CD4-positive, alpha-beta memory T cell (primary cell): ENCODE measurements at regions of chr16 and their contacts with region 1.

Region 1: GRCh38 chr16:10256784-10257641 is 74.8 kb upstream of the GRIN2A start:
- DNase-seq: peak in 4 of 5 donors; percentile 12 to 41 (median 29)
- H3K4me3 ChIP-seq: no peak overlapping the region
- H3K4me3 Mint-ChIP-seq: peak overlapping the region in 1 of 8 donors; percentile 13
- H3K27ac ChIP-seq: no peak overlapping the region
- H3K27ac Mint-ChIP-seq: peak overlapping the region in 1 of 7 donors; percentile 56
- H3K4me1 ChIP-seq: peaks cover 4% of the 10 kb centered on the region
- H3K4me1 Mint-ChIP-seq: peaks cover 0 to 6% (median 2%) of the 10 kb centered on the region in 4 donors
- H3K27me3 ChIP-seq: no peaks in the 10 kb centered on the region
- H3K27me3 Mint-ChIP-seq: peaks cover 6 to 12% of the 10 kb centered on the region in 2 donors

Region 2: DNA sequence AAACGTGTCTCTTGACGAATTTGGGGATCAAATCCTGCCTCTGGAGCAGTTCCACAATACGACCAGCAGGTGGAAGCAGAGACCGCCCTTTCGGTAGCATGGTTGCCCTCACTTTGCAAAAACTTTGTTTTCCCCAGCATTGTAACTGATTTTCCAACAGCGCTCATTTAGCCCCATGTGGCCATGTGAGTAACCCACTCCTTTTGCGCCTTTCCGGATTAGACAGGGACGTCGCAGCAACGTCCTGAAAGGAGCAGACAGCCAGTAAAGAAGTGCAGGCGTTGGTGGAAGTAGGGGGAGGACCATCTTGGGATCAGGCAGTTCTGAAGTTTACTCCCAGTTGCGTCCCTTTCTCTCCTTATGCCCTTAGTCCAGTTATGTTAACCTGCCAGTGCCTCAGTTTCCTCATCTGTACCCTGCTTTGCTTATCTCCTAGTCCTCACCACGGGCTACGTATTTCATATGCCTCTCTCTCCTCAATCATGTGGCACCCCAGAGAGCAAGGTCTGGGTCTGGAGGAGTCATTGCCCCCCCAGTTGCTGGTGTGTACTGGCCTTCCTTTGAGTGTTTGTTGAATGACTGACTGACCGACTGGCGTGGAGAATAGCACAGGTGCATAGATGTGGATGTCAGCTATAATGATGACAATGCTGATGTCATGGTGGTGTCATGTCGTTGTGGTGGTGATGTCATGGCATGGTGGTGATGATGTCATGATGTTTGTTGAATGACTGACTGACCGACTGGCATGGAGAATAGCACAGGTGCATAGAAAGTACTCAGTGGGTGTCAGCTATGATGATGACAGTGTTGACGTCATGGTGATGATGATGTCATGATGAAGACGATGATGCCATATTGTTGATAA is 1689.0 kb before region 1 on chr16:
- CTCF ChIA-PET with region 1: no interaction called
- POLR2A ChIA-PET with region 1: no interaction called
- intact Hi-C with region 1: loop called (anchors 10 kb)
- DNase-seq: peak; percentile 71 to 82 (median 80)
- H3K4me3 ChIP-seq: no peak overlapping the region
- H3K4me3 Mint-ChIP-seq: peak overlapping the region in 4 of 8 donors; percentile 14 to 41 (median 28)
- H3K27ac ChIP-seq: no peak overlapping the region
- H3K27ac Mint-ChIP-seq: peak overlapping the region in 5 of 7 donors; percentile 48 to 83 (median 62)
- H3K4me1 ChIP-seq: no peaks in the 10 kb centered on the region
- H3K4me1 Mint-ChIP-seq: peaks cover 4 to 10% (median 7%) of the 10 kb centered on the region in 4 donors
- H3K27me3 ChIP-seq: no peaks in the 10 kb centered on the region
- H3K27me3 Mint-ChIP-seq: peaks cover 0 to 16% of the 10 kb centered on the region in 2 donors

Region 3: DNA sequence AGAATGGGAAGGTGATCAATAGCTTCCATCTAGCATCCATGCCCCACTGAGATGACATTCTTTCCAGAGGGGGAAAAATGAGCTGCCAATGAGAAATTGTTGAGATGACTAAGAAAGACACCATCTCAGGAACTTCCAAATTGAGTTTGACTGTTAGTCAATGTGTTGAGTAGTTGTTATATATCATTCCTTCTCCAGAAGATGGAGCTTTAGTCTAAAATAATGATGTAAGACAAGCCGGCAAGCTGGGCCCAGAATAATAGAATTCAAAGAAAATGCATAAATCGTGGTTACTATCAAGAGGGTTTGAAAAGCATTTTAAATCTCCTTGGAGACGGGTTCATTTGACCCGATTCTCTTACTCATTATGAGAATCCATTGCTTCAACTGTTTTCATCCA is 57.8 kb after region 1 on chr16:
- CTCF ChIA-PET with region 1: interaction called, 6 read pairs
- POLR2A ChIA-PET with region 1: no interaction called
- intact Hi-C with region 1: loop called (anchors 2 kb)
- DNase-seq: peak in 4 of 5 donors; percentile 37 to 57 (median 46)
- H3K4me3 ChIP-seq: no peak overlapping the region
- H3K4me3 Mint-ChIP-seq: no peak overlapping the region
- H3K27ac ChIP-seq: no peak overlapping the region
- H3K27ac Mint-ChIP-seq: peak overlapping the region in 1 of 7 donors; percentile 65
- H3K4me1 ChIP-seq: peaks cover 8% of the 10 kb centered on the region
- H3K4me1 Mint-ChIP-seq: peaks cover 14 to 29% (median 20%) of the 10 kb centered on the region in 4 donors
- H3K27me3 ChIP-seq: no peaks in the 10 kb centered on the region
- H3K27me3 Mint-ChIP-seq: no peaks in the 10 kb centered on the region

Region 4: DNA sequence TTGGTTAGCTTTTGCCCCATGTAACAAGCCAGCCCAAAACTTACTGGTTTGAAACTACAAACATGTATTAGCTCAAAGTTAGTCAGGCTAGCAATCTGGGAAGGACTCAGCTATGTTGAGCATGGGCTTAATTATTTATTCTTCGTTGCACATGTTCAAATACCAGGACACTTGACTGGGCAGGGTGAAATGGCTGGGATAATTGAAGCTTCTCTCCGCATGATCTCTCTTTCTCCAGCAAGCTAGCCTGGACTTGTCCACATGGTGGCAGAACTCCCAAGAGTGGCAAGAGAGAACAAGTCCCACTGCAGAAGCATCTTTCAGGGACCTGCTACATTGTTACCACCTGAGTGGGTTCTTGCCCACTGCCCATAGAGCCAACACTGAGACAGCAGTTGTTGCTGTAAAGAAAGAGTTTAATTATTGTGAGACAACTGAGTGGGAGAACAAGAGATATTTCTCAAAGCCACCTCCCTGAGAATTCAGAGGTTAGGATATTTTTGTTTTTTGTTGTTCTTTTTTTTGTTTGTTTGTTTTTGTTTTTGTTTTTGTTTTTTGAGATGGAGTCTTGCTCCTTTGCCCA is 112.0 kb after region 1 on chr16:
- CTCF ChIA-PET with region 1: no interaction called
- POLR2A ChIA-PET with region 1: no interaction called
- intact Hi-C with region 1: no loop called
- DNase-seq: no peak
- H3K4me3 ChIP-seq: no peak overlapping the region
- H3K4me3 Mint-ChIP-seq: no peak overlapping the region
- H3K27ac ChIP-seq: no peak overlapping the region
- H3K27ac Mint-ChIP-seq: no peak overlapping the region
- H3K4me1 ChIP-seq: no peaks in the 10 kb centered on the region
- H3K4me1 Mint-ChIP-seq: no peaks in the 10 kb centered on the region
- H3K27me3 ChIP-seq: no peaks in the 10 kb centered on the region
- H3K27me3 Mint-ChIP-seq: no peaks in the 10 kb centered on the region

Region 5: GRCh38 chr16:10504404-10504885 is 247.4 kb after region 1 on chr16:
- CTCF ChIA-PET with region 1: interaction called, 26 read pairs
- POLR2A ChIA-PET with region 1: no interaction called
- intact Hi-C with region 1: no loop called
- DNase-seq: no peak
- H3K4me3 ChIP-seq: no peak overlapping the region
- H3K4me3 Mint-ChIP-seq: no peak overlapping the region
- H3K27ac ChIP-seq: no peak overlapping the region
- H3K27ac Mint-ChIP-seq: peak overlapping the region in 4 of 7 donors; percentile 0 to 77 (median 41)
- H3K4me1 ChIP-seq: no peaks in the 10 kb centered on the region
- H3K4me1 Mint-ChIP-seq: peaks cover 2 to 7% (median 6%) of the 10 kb centered on the region in 4 donors
- H3K27me3 ChIP-seq: no peaks in the 10 kb centered on the region
- H3K27me3 Mint-ChIP-seq: peaks cover 0 to under 1% of the 10 kb centered on the region in 2 donors

Region 6: GRCh38 chr16:10509534-10510025 is 252.6 kb after region 1 on chr16:
- CTCF ChIA-PET with region 1: interaction called, 26 read pairs
- POLR2A ChIA-PET with region 1: no interaction called
- intact Hi-C with region 1: no loop called
- DNase-seq: peak; percentile 52 to 72 (median 66)
- H3K4me3 ChIP-seq: no peak overlapping the region
- H3K4me3 Mint-ChIP-seq: peak overlapping the region in 1 of 8 donors; percentile 5
- H3K27ac ChIP-seq: no peak overlapping the region
- H3K27ac Mint-ChIP-seq: no peak overlapping the region
- H3K4me1 ChIP-seq: no peaks in the 10 kb centered on the region
- H3K4me1 Mint-ChIP-seq: peaks cover 3 to 6% (median 5%) of the 10 kb centered on the region in 4 donors
- H3K27me3 ChIP-seq: no peaks in the 10 kb centered on the region
- H3K27me3 Mint-ChIP-seq: peaks cover 1 to 4% of the 10 kb centered on the region in 2 donors

Region 7: GRCh38 chr16:10737068-10737625 is 480.1 kb after region 1 on chr16:
- CTCF ChIA-PET with region 1: interaction called, 13 read pairs
- POLR2A ChIA-PET with region 1: no interaction called
- intact Hi-C with region 1: no loop called
- DNase-seq: peak; percentile 76 to 78 (median 78)
- H3K4me3 ChIP-seq: peak overlapping the region in 1 of 2 donors; percentile 20
- H3K4me3 Mint-ChIP-seq: peak overlapping the region; percentile 64 to 82 (median 74)
- H3K27ac ChIP-seq: peak overlapping the region; percentile 19
- H3K27ac Mint-ChIP-seq: peak overlapping the region; percentile 36 to 91 (median 86)
- H3K4me1 ChIP-seq: peaks cover 14% of the 10 kb centered on the region
- H3K4me1 Mint-ChIP-seq: peaks cover 3 to 12% (median 9%) of the 10 kb centered on the region in 4 donors
- H3K27me3 ChIP-seq: no peaks in the 10 kb centered on the region
- H3K27me3 Mint-ChIP-seq: no peaks in the 10 kb centered on the region